ENCODE measurements at regions of chr1 and their contacts with region 1.

Region 1: GRCh38 chr1:149962123-149962548 is 25.5 kb upstream of the MTMR11 start:
- DNase-seq: peak; percentile 67
- ATAC-seq: peak; percentile 77
- H3K4me3 ChIP-seq: no peak overlapping the region
- H3K27ac ChIP-seq: no peak overlapping the region
- H3K4me1 ChIP-seq: peaks cover 11% of the 10 kb centered on the region
- H3K27me3 ChIP-seq: no peaks in the 10 kb centered on the region
- CTCF ChIP-seq: peak; percentile 78
- EP300 ChIP-seq: no peak
- POLR2A ChIP-seq: no peak
- RAD21 ChIP-seq: peak; percentile 76

Region 2: GRCh38 chr1:149927503-149928387 is 34.4 kb before region 1 on chr1 and contains the start of gene SF3B4:
- CTCF ChIA-PET with region 1: no interaction called
- POLR2A ChIA-PET with region 1: no interaction called
- in situ Hi-C with region 1: no loop called
- intact Hi-C with region 1: no loop called
- DNase-seq: peak; percentile 87
- ATAC-seq: peak; percentile 99
- H3K4me3 ChIP-seq: peak within 1 kb of the TSS; percentile 90 to 99 (median 92)
- H3K27ac ChIP-seq: peak within 1 kb of the TSS; percentile 88
- H3K4me1 ChIP-seq: peaks cover 30% of the 10 kb centered on the region
- H3K27me3 ChIP-seq: no peaks in the 10 kb centered on the region; a peak in 1 of 5 replicates
- CTCF ChIP-seq: 0 out of 2 replicates have a peak, but pooled peaks have one; percentile 18
- EP300 ChIP-seq: 0 out of 4 replicates have a peak, but pooled peaks of 1 of the 2 experiments have one; percentile 16
- POLR2A ChIP-seq: peak; percentile 94 to 95
- RAD21 ChIP-seq: 0 out of 2 replicates have a peak, but pooled peaks have one; percentile 14
- total RNA-seq, gene SF3B4: 14.8 and 24.6 TPM in 2 replicates

Region 3: DNA sequence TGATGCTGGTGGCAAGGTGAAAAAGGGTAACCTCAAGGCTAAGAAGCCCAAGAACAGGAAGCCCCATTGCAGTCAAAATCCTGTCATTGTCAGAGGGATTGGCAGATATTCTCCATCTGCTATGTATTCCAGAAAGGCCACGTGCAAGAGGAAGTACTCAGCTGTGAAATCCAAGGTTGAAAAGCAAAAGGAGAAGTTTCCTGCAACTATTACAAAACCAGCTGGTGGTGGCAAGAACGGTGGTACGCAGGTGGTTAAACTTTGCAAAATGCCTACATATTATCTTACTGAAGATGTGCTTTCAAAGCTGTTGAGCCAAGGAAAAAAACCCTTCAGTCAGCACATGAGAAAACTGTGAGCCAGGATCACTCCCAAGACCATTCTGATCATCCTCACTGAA is 91.8 kb after region 1 on chr1:
- CTCF ChIA-PET with region 1: interaction called, 61 read pairs
- POLR2A ChIA-PET with region 1: no interaction called
- in situ Hi-C with region 1: loop called (anchors 5 kb)
- intact Hi-C with region 1: loop called (anchors 1 kb)
- DNase-seq: no peak
- ATAC-seq: no peak
- H3K4me3 ChIP-seq: no peak overlapping the region
- H3K27ac ChIP-seq: no peak overlapping the region
- H3K4me1 ChIP-seq: peaks cover 16% of the 10 kb centered on the region; the same call in 1 of the 2 replicates
- H3K27me3 ChIP-seq: no peaks in the 10 kb centered on the region
- CTCF ChIP-seq: no peak
- EP300 ChIP-seq: no peak
- POLR2A ChIP-seq: no peak
- RAD21 ChIP-seq: no peak

Region 4: GRCh38 chr1:150162862-150163706 is 200.9 kb after region 1 on chr1:
- CTCF ChIA-PET with region 1: interaction called, 13 read pairs
- POLR2A ChIA-PET with region 1: no interaction called
- in situ Hi-C with region 1: no loop called
- intact Hi-C with region 1: loop called (anchors 10 kb)
- DNase-seq: peak; percentile 95
- ATAC-seq: peak; percentile 96
- H3K4me3 ChIP-seq: peak overlapping the region; percentile 47 to 66 (median 59)
- H3K27ac ChIP-seq: peak overlapping the region; percentile 37
- H3K4me1 ChIP-seq: peaks cover 37% of the 10 kb centered on the region
- H3K27me3 ChIP-seq: peaks cover 1 to 13% of the 10 kb centered on the region in 2 experiments; a peak in 2 of 5 replicates
- CTCF ChIP-seq: no peak
- EP300 ChIP-seq: peak in 1 of 2 experiments; percentile 27; a peak in 1 of 4 replicates
- POLR2A ChIP-seq: peak; percentile 41 to 44; a peak in 3 of 4 replicates
- RAD21 ChIP-seq: no peak

Region 5: GRCh38 chr1:150168960-150169601 is 206.9 kb after region 1 on chr1:
- CTCF ChIA-PET with region 1: interaction called, 13 read pairs
- POLR2A ChIA-PET with region 1: no interaction called
- in situ Hi-C with region 1: no loop called
- intact Hi-C with region 1: loop called (anchors 10 kb)
- DNase-seq: peak; percentile 47
- ATAC-seq: peak; percentile 77
- H3K4me3 ChIP-seq: no peak overlapping the region
- H3K27ac ChIP-seq: no peak overlapping the region
- H3K4me1 ChIP-seq: peaks cover 32% of the 10 kb centered on the region
- H3K27me3 ChIP-seq: peaks cover 1 to 14% of the 10 kb centered on the region in 2 experiments; a peak in 2 of 5 replicates
- CTCF ChIP-seq: peak; percentile 84
- EP300 ChIP-seq: no peak
- POLR2A ChIP-seq: no peak
- RAD21 ChIP-seq: peak; percentile 76

Region 6: GRCh38 chr1:150186789-150187559 is 224.8 kb after region 1 on chr1:
- CTCF ChIA-PET with region 1: interaction called, 12 read pairs
- POLR2A ChIA-PET with region 1: no interaction called
- in situ Hi-C with region 1: loop called (anchors 10 kb)
- intact Hi-C with region 1: loop called (anchors 2 kb)
- DNase-seq: peak; percentile 46
- ATAC-seq: peak; percentile 74
- H3K4me3 ChIP-seq: peak overlapping the region; percentile 35 to 55 (median 45)
- H3K27ac ChIP-seq: no peak overlapping the region
- H3K4me1 ChIP-seq: peaks cover 34% of the 10 kb centered on the region
- H3K27me3 ChIP-seq: peaks cover 0 to 3% of the 10 kb centered on the region in 2 experiments; a peak in 2 of 5 replicates
- CTCF ChIP-seq: peak; percentile 52
- EP300 ChIP-seq: no peak
- POLR2A ChIP-seq: no peak
- RAD21 ChIP-seq: peak; percentile 17; the same call in 1 of the 2 replicates

Region 7: DNA sequence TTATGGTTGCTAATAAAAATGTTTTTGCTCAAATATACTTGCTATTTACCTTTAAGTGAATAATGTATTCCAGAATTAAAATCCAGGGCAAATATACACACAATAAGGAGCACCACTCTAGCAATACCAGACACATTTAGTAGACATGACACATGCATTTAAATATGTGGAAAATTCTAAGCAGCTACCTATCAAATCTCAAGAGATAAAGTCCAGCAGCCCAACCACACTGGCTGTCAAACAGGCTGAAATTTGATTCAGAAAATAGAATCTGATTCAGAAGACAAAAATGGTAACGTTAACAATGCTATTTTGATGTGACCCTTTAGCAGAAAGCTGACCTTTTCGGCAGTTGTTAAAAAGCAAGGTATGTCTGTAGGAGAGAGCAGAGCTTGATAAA is 229.9 kb after region 1 on chr1:
- CTCF ChIA-PET with region 1: interaction called, 12 read pairs
- POLR2A ChIA-PET with region 1: no interaction called
- in situ Hi-C with region 1: loop called (anchors 10 kb)
- intact Hi-C with region 1: loop called (anchors 2 kb)
- DNase-seq: no peak
- ATAC-seq: no peak
- H3K4me3 ChIP-seq: no peak overlapping the region
- H3K27ac ChIP-seq: no peak overlapping the region
- H3K4me1 ChIP-seq: peaks cover 2% of the 10 kb centered on the region
- H3K27me3 ChIP-seq: peaks cover 0 to 3% of the 10 kb centered on the region in 2 experiments; a peak in 2 of 5 replicates
- CTCF ChIP-seq: no peak
- EP300 ChIP-seq: no peak
- POLR2A ChIP-seq: no peak
- RAD21 ChIP-seq: no peak

Measured in HepG2 (cell line).